WTC11 (cell line): ENCODE measurements at regions of chr15 and their contacts with region 1.

Region 1: GRCh38 chr15:80970018-80970658 is 19.5 kb downstream of the MESD start:
- DNase-seq: peak; percentile 52
- ATAC-seq: 0 out of 2 replicates have a peak, but pooled peaks have one; percentile 6
- H3K4me3 Mint-ChIP-seq: no peak overlapping the region
- H3K27ac Mint-ChIP-seq: peak overlapping the region; percentile 61; the same call in 1 of the 2 replicates
- H3K4me1 Mint-ChIP-seq: peaks cover 60% of the 10 kb centered on the region
- H3K27me3 Mint-ChIP-seq: no peaks in the 10 kb centered on the region
- CTCF ChIP-seq: peak; percentile 84

Region 2: GRCh38 chr15:80567721-80568157 is 402.4 kb before region 1 on chr15:
- CTCF ChIA-PET with region 1: interaction called, 11 read pairs
- POLR2A ChIA-PET with region 1: no interaction called
- DNase-seq: peak; percentile 52
- ATAC-seq: peak; percentile 90
- H3K4me3 Mint-ChIP-seq: no peak overlapping the region
- H3K27ac Mint-ChIP-seq: no peak overlapping the region
- H3K4me1 Mint-ChIP-seq: peaks cover 22% of the 10 kb centered on the region
- H3K27me3 Mint-ChIP-seq: no peaks in the 10 kb centered on the region; the same call in 1 of the 2 replicates
- CTCF ChIP-seq: no peak; the same call in 1 of the 2 replicates

Region 3: DNA sequence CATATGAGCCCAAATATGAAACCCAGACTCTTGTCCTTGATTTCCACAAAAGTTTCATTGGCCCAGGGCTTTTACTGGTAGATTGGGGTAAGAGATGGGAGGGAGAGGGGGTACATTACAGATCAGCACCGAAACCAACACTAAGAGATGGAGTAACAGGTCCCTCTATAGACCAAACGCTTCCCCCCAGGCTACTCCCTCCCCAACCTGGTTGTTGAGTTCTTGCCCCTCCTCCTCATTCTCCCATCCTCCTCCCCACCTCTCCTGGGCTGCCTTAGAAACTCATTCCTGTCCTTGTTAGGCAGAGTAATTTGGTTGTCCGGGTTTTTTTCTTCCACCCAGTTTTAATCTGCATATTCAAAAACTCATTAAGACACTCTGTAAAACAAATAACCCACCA is 54.7 kb before region 1 on chr15:
- CTCF ChIA-PET with region 1: interaction called, 23 read pairs
- POLR2A ChIA-PET with region 1: no interaction called
- DNase-seq: peak; percentile 66
- ATAC-seq: peak; percentile 99
- H3K4me3 Mint-ChIP-seq: no peak overlapping the region
- H3K27ac Mint-ChIP-seq: no peak overlapping the region
- H3K4me1 Mint-ChIP-seq: peaks cover 23% of the 10 kb centered on the region
- H3K27me3 Mint-ChIP-seq: no peaks in the 10 kb centered on the region; the same call in 1 of the 2 replicates
- CTCF ChIP-seq: no peak

Region 4: GRCh38 chr15:80940851-80941250 is 29.3 kb before region 1 on chr15:
- CTCF ChIA-PET with region 1: interaction called, 12 read pairs
- POLR2A ChIA-PET with region 1: no interaction called
- DNase-seq: no peak
- ATAC-seq: no peak
- H3K4me3 Mint-ChIP-seq: no peak overlapping the region
- H3K27ac Mint-ChIP-seq: no peak overlapping the region
- H3K4me1 Mint-ChIP-seq: no peaks in the 10 kb centered on the region
- H3K27me3 Mint-ChIP-seq: no peaks in the 10 kb centered on the region
- CTCF ChIP-seq: no peak

Region 5: DNA sequence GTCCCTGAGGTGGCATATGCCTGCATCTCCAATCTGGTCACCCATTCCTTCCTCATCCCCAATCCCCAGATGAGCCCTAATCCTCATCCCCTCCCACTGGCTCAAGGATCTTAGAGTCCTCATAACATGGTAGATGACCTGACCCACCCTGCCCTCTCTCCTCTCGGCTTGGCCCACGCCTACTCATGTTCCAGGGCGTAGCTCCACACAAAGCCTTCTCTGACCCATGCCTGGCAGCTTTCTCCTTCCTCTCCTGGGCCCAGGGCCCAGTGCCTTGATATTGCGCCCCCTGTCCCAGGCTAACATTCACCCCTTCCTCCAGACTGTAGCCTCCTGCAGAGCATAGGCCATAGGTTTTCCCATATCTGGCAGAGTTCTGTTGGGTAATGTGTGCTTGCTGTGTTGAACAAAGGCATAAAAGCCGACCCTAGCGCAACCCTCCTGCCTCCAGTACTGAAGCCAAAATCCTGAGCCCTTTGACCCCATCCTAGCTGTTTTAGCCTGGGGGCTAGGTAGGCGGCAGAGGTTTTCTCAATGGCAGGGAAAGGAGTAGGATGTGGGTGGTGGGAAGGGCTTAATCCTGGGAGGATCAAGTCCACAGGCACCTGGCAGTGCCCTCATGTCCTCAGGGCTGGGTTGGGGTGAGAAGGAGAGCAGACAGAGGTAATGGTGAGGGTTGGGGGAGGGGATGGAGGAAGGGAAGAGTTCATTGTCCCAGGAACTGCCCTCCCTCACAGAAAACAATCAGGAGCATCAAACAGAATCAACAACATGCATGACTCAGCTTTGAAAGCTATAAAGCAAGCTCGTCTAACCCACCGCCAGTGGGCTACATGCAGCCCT is 16.0 kb before region 1 on chr15:
- CTCF ChIA-PET with region 1: interaction called, 39 read pairs
- POLR2A ChIA-PET with region 1: interaction called, 5 read pairs
- DNase-seq: no peak
- ATAC-seq: peak; percentile 90
- H3K4me3 Mint-ChIP-seq: no peak overlapping the region
- H3K27ac Mint-ChIP-seq: peak overlapping the region; percentile 66
- H3K4me1 Mint-ChIP-seq: peaks cover 34% of the 10 kb centered on the region
- H3K27me3 Mint-ChIP-seq: no peaks in the 10 kb centered on the region
- CTCF ChIP-seq: no peak